ENCODE measurements at regions of chr7 and their contacts with region 1.

Region 1: GRCh38 chr7:73623798-73624668 is at the start of gene MLXIPL:
- DNase-seq: peak; percentile 75
- ATAC-seq: peak; percentile 90
- H3K4me3 ChIP-seq: peak within 1 kb of the TSS; percentile 77 to 91
- H3K27ac ChIP-seq: peak within 1 kb of the TSS; percentile 92
- H3K4me1 ChIP-seq: peaks cover 22 to 46% of the 10 kb centered on the region in 2 experiments
- H3K27me3 ChIP-seq: no peaks in the 10 kb centered on the region
- CTCF ChIP-seq: no peak
- POLR2A ChIP-seq: peak; percentile 90
- RAD21 ChIP-seq: no peak
- total RNA-seq, gene MLXIPL: 79.4 TPM

Region 2: GRCh38 chr7:73635428-73636200 is 11.6 kb after region 1 on chr7:
- CTCF ChIA-PET with region 1: interaction called, 4 read pairs
- POLR2A ChIA-PET with region 1: interaction called, 16 read pairs
- RAD21 ChIA-PET with region 1: interaction called, 3 to 4 read pairs
- intact Hi-C with region 1: no loop called
- DNase-seq: no peak
- ATAC-seq: peak; percentile 42
- H3K4me3 ChIP-seq: no peak overlapping the region
- H3K27ac ChIP-seq: peak overlapping the region; percentile 94
- H3K4me1 ChIP-seq: peaks cover 44 to 70% of the 10 kb centered on the region in 2 experiments
- H3K27me3 ChIP-seq: no peaks in the 10 kb centered on the region
- CTCF ChIP-seq: no peak
- POLR2A ChIP-seq: no peak
- RAD21 ChIP-seq: no peak

Region 3: GRCh38 chr7:73667344-73668102 is 43.5 kb after region 1 on chr7 and contains the start of gene VPS37D:
- CTCF ChIA-PET with region 1: interaction called, 4 read pairs
- POLR2A ChIA-PET with region 1: interaction called, 4 read pairs
- RAD21 ChIA-PET with region 1: interaction called in 1 of 2 experiments, 7 read pairs
- intact Hi-C with region 1: loop called (anchors 2 kb)
- DNase-seq: peak; percentile 67
- ATAC-seq: peak; percentile 85
- H3K4me3 ChIP-seq: peak within 1 kb of the TSS; percentile 68 to 69
- H3K27ac ChIP-seq: peak within 1 kb of the TSS; percentile 66; the same call in 1 of the 2 replicates
- H3K4me1 ChIP-seq: peaks cover 33 to 46% of the 10 kb centered on the region in 2 experiments
- H3K27me3 ChIP-seq: no peaks in the 10 kb centered on the region
- CTCF ChIP-seq: peak; percentile 57 to 68 (median 61); a peak in 5 of 6 replicates
- POLR2A ChIP-seq: no peak
- RAD21 ChIP-seq: peak; percentile 72
- total RNA-seq, gene VPS37D: 9.5 TPM

Region 4: DNA sequence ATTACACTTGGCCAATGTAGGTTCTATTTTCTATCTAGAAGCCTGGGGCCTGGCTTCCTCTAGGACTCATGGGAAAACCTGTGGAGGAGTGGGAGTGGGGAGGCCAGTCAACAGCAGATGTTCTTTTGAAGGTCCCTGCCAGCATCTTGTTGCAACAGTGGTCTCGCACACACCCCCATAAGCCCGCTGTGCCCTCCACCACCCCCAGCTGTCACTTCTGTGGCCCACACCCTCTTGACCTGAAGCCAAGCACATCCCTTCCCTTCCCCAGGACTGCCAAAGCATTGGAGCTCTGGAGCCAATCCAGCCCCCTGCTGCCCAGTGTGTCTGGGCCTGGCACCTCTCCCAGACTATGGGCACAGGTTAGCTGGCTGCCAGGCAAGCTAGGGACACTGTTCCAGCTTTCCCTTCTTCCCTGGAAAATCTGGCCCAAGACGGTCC is 97.4 kb after region 1 on chr7:
- CTCF ChIA-PET with region 1: interaction called, 8 read pairs
- POLR2A ChIA-PET with region 1: interaction called, 4 read pairs
- RAD21 ChIA-PET with region 1: no interaction called
- intact Hi-C with region 1: loop called (anchors 1 kb)
- DNase-seq: no peak
- ATAC-seq: no peak
- H3K4me3 ChIP-seq: no peak overlapping the region
- H3K27ac ChIP-seq: peak overlapping the region; percentile 1; the same call in 1 of the 2 replicates
- H3K4me1 ChIP-seq: peaks cover 46 to 57% of the 10 kb centered on the region in 2 experiments
- H3K27me3 ChIP-seq: no peaks in the 10 kb centered on the region
- CTCF ChIP-seq: no peak
- POLR2A ChIP-seq: no peak
- RAD21 ChIP-seq: no peak

Region 5: DNA sequence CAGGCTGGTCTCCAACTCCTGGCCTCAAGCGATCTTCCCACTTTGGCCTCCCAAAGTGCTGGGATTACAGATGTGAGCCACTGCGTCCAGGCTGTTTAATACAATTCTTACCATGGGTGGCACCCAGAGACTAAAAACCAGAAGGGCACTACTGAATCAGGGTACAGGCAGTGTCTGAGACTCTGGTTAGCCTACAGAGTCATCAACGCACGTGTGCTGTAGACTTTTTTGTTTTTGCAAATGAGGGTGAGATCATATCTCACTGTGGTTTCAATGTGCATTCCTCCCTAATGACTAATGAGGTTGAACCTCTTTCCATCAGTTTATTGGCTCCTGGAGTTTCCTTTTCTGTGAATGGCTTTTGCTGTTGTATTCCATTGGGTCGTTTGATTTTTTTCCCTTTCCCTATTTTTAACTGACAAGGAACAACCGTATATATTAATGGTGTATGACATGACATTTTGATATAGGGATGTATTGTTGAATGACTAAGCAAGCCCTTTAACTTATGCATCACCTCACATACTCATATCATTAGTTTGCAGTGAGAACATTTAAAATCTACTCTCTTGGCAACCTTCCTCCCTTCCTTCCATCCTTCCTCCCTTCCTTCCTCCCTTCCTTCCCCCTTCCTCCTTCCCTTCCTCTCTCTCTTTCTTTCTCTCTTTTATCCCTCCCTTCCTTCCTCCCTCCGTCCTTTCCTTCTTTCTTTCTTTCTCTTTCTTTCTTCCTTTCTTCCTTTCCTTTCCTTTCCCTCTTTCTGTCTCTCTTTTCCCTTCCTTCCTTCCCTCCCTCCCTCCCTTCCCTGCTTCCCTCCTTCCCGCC is 227.6 kb after region 1 on chr7:
- CTCF ChIA-PET with region 1: no interaction called
- POLR2A ChIA-PET with region 1: no interaction called
- RAD21 ChIA-PET with region 1: no interaction called
- intact Hi-C with region 1: loop called (anchors 10 kb)
- DNase-seq: peak; percentile 92
- ATAC-seq: peak; percentile 66
- H3K4me3 ChIP-seq: peak overlapping the region in 1 of 2 experiments; percentile 16; a peak in 1 of 4 replicates
- H3K27ac ChIP-seq: peak overlapping the region; percentile 94
- H3K4me1 ChIP-seq: peaks cover 43 to 72% of the 10 kb centered on the region in 2 experiments
- H3K27me3 ChIP-seq: no peaks in the 10 kb centered on the region
- CTCF ChIP-seq: no peak
- POLR2A ChIP-seq: no peak
- RAD21 ChIP-seq: no peak

Region 6: GRCh38 chr7:74149603-74150002 is 525.6 kb after region 1 on chr7:
- CTCF ChIA-PET with region 1: no interaction called
- POLR2A ChIA-PET with region 1: no interaction called
- RAD21 ChIA-PET with region 1: no interaction called
- intact Hi-C with region 1: no loop called
- DNase-seq: no peak
- ATAC-seq: no peak
- H3K4me3 ChIP-seq: no peak overlapping the region
- H3K27ac ChIP-seq: no peak overlapping the region
- H3K4me1 ChIP-seq: peaks cover 7 to 16% of the 10 kb centered on the region in 2 experiments
- H3K27me3 ChIP-seq: no peaks in the 10 kb centered on the region
- CTCF ChIP-seq: no peak
- POLR2A ChIP-seq: no peak
- RAD21 ChIP-seq: no peak

Measured in HCT116 (cell line).